ENCODE measurements at regions of chr10 and their contacts with region 1.

Region 1: GRCh38 chr10:72133517-72133916 is 45.2 kb upstream of the SPOCK2 start:
- DNase-seq: peak; percentile 92
- ATAC-seq: peak; percentile 91
- H3K4me3 ChIP-seq: 0 out of 2 replicates have a peak overlapping the region, but pooled peaks have one; percentile 4
- H3K27ac ChIP-seq: peak overlapping the region; percentile 75
- H3K4me1 ChIP-seq: peaks cover 42% of the 10 kb centered on the region
- H3K27me3 ChIP-seq: no peaks in the 10 kb centered on the region
- CTCF ChIP-seq: no peak
- EP300 ChIP-seq: peak; percentile 84 to 96; a peak in 3 of 4 replicates
- POLR2A ChIP-seq: no peak
- RAD21 ChIP-seq: no peak

Region 2: GRCh38 chr10:71748671-71749191 is 384.8 kb before region 1 on chr10:
- CTCF ChIA-PET with region 1: no interaction called
- POLR2A ChIA-PET with region 1: no interaction called
- RAD21 ChIA-PET with region 1: no interaction called
- SMC1A ChIA-PET with region 1: no interaction called
- in situ Hi-C with region 1: no loop called
- intact Hi-C with region 1: no loop called
- DNase-seq: peak; percentile 58
- ATAC-seq: peak; percentile 75
- H3K4me3 ChIP-seq: no peak overlapping the region; the same call in 1 of the 2 replicates
- H3K27ac ChIP-seq: peak overlapping the region; percentile 77
- H3K4me1 ChIP-seq: peaks cover 51% of the 10 kb centered on the region
- H3K27me3 ChIP-seq: no peaks in the 10 kb centered on the region
- CTCF ChIP-seq: peak in 1 of 3 experiments; percentile 15; a peak in 1 of 6 replicates
- EP300 ChIP-seq: no peak
- POLR2A ChIP-seq: peak; percentile 46; the same call in 1 of the 2 replicates
- RAD21 ChIP-seq: no peak

Region 3: GRCh38 chr10:72162978-72163377 is 29.5 kb after region 1 on chr10:
- CTCF ChIA-PET with region 1: interaction called, 4 read pairs
- POLR2A ChIA-PET with region 1: no interaction called
- RAD21 ChIA-PET with region 1: no interaction called
- SMC1A ChIA-PET with region 1: interaction called, 5 read pairs
- in situ Hi-C with region 1: no loop called
- intact Hi-C with region 1: loop called (anchors 1 kb)
- DNase-seq: peak; percentile 88
- ATAC-seq: peak; percentile 95
- H3K4me3 ChIP-seq: no peak overlapping the region
- H3K27ac ChIP-seq: peak overlapping the region; percentile 54; the same call in 1 of the 2 replicates
- H3K4me1 ChIP-seq: peaks cover 10% of the 10 kb centered on the region
- H3K27me3 ChIP-seq: no peaks in the 10 kb centered on the region
- CTCF ChIP-seq: no peak
- EP300 ChIP-seq: peak; percentile 80 to 83; a peak in 3 of 4 replicates
- POLR2A ChIP-seq: no peak
- RAD21 ChIP-seq: no peak

Region 4: DNA sequence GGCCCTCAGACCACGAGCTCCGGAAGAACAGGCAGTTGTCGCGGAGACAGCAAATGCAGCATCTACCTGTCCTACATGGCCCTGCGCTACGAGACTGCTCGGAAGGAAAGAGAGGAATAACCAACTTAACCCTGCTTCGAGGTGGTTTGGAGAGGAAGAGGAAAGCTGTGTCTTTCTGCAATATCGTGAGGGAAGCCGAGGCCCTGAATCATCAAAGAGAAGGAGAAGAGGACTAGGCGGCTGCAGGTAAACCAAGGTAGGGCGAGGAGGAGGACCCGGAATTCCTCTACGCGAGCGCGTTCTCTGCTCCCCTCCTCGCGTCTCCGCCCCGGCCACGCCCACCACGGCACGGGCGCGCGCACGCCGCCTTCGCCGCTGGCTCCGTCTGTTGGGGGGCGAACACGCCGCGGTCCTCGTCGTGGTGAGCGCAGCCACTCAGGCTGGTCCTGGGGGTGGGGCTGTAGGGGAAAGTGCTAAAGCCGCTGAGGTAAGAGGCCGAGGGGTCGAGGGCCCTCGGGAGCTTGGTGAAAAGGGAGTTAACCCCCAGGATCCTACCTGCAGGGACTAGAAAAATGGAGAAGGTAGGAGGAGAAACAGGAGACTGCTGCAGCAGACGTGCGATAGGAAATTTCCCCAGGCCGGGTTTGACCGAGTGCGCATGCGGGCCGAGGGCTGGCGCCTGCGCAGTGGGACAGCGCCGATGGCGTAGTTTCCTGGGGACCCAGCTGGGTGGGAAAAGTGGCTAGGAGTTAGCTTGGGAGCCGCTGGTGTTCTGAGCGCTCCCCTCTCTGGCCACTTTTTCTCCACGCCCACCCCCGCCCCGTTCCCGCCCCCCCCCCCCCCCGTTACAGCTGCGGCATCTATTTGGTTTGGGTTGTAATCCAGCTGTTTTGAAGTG is 82.4 kb after region 1 on chr10 and contains the starts of genes ANAPC16 and ASCC1:
- CTCF ChIA-PET with region 1: interaction called, 127 read pairs
- POLR2A ChIA-PET with region 1: interaction called, 18 read pairs
- RAD21 ChIA-PET with region 1: interaction called, 89 read pairs
- SMC1A ChIA-PET with region 1: interaction called, 122 read pairs
- in situ Hi-C with region 1: no loop called
- intact Hi-C with region 1: no loop called
- DNase-seq: peak; percentile 84
- ATAC-seq: peak; percentile 90
- H3K4me3 ChIP-seq: peak within 1 kb of the TSS; percentile 89
- H3K27ac ChIP-seq: peak within 1 kb of the TSS; percentile 91
- H3K4me1 ChIP-seq: peaks cover 29% of the 10 kb centered on the region
- H3K27me3 ChIP-seq: no peaks in the 10 kb centered on the region
- CTCF ChIP-seq: no peak
- EP300 ChIP-seq: no peak
- POLR2A ChIP-seq: peak; percentile 97
- RAD21 ChIP-seq: no peak
- polyA plus RNA-seq, gene ANAPC16: 178 to 208 TPM
- polyA plus RNA-seq, gene ASCC1: 41.6 to 49.9 TPM

Region 5: DNA sequence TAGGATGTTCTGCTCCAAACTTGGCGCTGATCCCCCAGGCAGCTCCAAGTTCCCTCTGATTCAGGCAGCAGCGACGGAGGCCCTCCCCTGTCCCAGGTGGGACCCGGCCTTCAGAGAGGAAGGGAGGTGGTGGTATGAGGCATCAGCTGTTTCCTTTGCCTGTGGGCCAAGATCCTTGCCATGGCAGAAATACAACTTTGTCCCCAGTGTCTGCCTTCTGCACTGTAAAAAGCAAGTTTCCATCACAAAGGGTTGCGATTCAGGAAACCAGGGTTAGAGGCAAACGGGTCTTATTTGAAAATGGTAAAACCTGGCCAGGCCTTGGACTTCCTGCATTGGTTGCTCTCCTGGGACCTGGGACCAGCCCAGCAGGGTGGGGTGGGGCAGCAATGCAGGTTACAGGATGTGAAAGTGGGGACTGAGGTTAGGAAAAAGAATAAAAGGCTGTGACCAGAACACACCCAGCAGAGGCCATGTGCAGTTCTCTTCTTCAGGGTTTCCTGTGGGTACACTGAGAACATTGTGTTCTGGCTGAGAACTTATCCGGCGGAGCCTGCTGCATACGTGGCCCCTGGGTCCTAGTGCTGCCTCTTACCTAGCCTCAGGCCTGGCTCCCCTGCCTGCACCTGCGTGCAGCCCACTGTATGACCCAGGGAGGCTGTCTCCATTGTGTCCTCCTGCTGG is 115.1 kb after region 1 on chr10:
- CTCF ChIA-PET with region 1: interaction called, 27 read pairs
- POLR2A ChIA-PET with region 1: interaction called, 5 read pairs
- RAD21 ChIA-PET with region 1: interaction called, 16 read pairs
- SMC1A ChIA-PET with region 1: interaction called, 10 read pairs
- in situ Hi-C with region 1: no loop called
- intact Hi-C with region 1: no loop called
- DNase-seq: peak; percentile 99
- ATAC-seq: peak; percentile 95
- H3K4me3 ChIP-seq: peak overlapping the region; percentile 55; the same call in 1 of the 2 replicates
- H3K27ac ChIP-seq: peak overlapping the region; percentile 97
- H3K4me1 ChIP-seq: peaks cover 72% of the 10 kb centered on the region
- H3K27me3 ChIP-seq: no peaks in the 10 kb centered on the region
- CTCF ChIP-seq: no peak
- EP300 ChIP-seq: peak; percentile 88 to 91
- POLR2A ChIP-seq: peak; percentile 89
- RAD21 ChIP-seq: no peak

Region 6: GRCh38 chr10:72260588-72261322 is 127.2 kb after region 1 on chr10:
- CTCF ChIA-PET with region 1: interaction called, 24 read pairs
- POLR2A ChIA-PET with region 1: interaction called, 12 read pairs
- RAD21 ChIA-PET with region 1: interaction called, 46 read pairs
- SMC1A ChIA-PET with region 1: interaction called, 10 read pairs
- in situ Hi-C with region 1: no loop called
- intact Hi-C with region 1: no loop called
- DNase-seq: peak; percentile 88
- ATAC-seq: peak; percentile 80
- H3K4me3 ChIP-seq: peak overlapping the region; percentile 68
- H3K27ac ChIP-seq: peak overlapping the region; percentile 95
- H3K4me1 ChIP-seq: peaks cover 68% of the 10 kb centered on the region
- H3K27me3 ChIP-seq: no peaks in the 10 kb centered on the region
- CTCF ChIP-seq: peak in 2 of 3 experiments; percentile 15 to 39; a peak in 2 of 6 replicates
- EP300 ChIP-seq: no peak; a peak in 2 of 4 replicates
- POLR2A ChIP-seq: peak; percentile 77
- RAD21 ChIP-seq: peak; percentile 9; the same call in 1 of the 2 replicates

Region 7: DNA sequence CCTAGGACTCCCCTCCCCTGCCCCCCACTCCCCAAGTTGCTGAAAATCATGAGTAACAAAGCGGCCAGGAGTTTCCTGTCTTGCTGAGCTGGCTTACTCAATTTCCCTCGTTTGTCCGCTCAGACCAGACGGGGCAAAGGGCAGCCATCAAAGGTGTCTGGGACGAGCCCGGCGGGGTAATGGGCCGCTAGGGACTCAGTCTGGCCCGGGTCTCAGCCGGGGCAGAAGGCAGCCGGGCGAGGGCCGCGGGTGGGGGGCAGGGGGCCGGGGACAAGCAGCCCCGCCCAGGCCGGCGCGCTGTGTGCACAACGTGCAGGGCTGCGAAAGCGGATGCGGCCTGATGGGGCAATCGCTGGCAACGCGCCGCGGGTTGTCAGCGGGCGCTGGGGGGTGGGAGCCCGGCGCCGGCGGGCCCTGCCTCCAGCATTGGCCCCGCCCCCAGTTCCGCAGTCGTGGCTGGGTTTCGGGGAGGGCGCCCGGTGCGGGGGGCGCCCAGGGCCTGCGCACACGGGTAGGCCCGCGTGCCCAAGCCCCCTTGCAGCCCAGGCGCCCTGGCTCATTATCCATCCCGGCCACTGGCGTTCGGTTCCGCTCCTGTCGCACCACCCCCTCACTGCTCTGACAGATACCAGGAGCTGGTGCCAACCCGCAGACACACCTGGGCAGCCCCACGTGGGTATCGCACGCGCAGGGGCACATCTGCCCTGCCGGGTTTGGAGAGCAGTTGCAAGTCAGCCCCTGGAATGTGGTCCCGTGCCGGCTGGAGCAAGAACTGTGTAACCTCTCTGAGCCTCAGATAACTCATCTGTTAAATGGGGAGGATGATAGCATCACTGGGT is 186.1 kb after region 1 on chr10:
- CTCF ChIA-PET with region 1: interaction called, 12 read pairs
- POLR2A ChIA-PET with region 1: no interaction called
- RAD21 ChIA-PET with region 1: interaction called, 5 read pairs
- SMC1A ChIA-PET with region 1: interaction called, 17 read pairs
- in situ Hi-C with region 1: no loop called
- intact Hi-C with region 1: no loop called
- DNase-seq: no peak
- ATAC-seq: peak; percentile 81
- H3K4me3 ChIP-seq: peak overlapping the region; percentile 76
- H3K27ac ChIP-seq: peak overlapping the region; percentile 89
- H3K4me1 ChIP-seq: peaks cover 59% of the 10 kb centered on the region
- H3K27me3 ChIP-seq: no peaks in the 10 kb centered on the region
- CTCF ChIP-seq: no peak
- EP300 ChIP-seq: 0 out of 4 replicates have a peak, but pooled peaks of 1 of the 2 experiments have one; percentile 59
- POLR2A ChIP-seq: peak; percentile 84
- RAD21 ChIP-seq: no peak

Region 8: GRCh38 chr10:72337020-72337629 is 203.6 kb after region 1 on chr10:
- CTCF ChIA-PET with region 1: interaction called, 127 read pairs
- POLR2A ChIA-PET with region 1: interaction called, 9 read pairs
- RAD21 ChIA-PET with region 1: interaction called, 76 read pairs
- SMC1A ChIA-PET with region 1: interaction called, 168 read pairs
- in situ Hi-C with region 1: loop called (anchors 5 kb)
- intact Hi-C with region 1: loop called (anchors 1 kb)
- DNase-seq: no peak
- ATAC-seq: peak; percentile 11; the same call in 1 of the 3 replicates
- H3K4me3 ChIP-seq: no peak overlapping the region
- H3K27ac ChIP-seq: peak overlapping the region; percentile 1; the same call in 1 of the 2 replicates
- H3K4me1 ChIP-seq: peaks cover 61% of the 10 kb centered on the region
- H3K27me3 ChIP-seq: no peaks in the 10 kb centered on the region
- CTCF ChIP-seq: peak; percentile 95 to 98 (median 96)
- EP300 ChIP-seq: no peak
- POLR2A ChIP-seq: peak; percentile 18; the same call in 1 of the 2 replicates
- RAD21 ChIP-seq: peak; percentile 91